GM10248 (cell line): ENCODE measurements at regions of chr14 and their contacts with region 1.

Region 1: GRCh38 chr14:73295198-73295796 is 58.0 kb downstream of the PAPLN start:
- DNase-seq: peak; percentile 43
- CTCF ChIP-seq: peak; percentile 64

Region 2: GRCh38 chr14:73153272-73153671 is 142.0 kb before region 1 on chr14:
- CTCF ChIA-PET with region 1: no interaction called
- POLR2A ChIA-PET with region 1: no interaction called
- DNase-seq: no peak
- CTCF ChIP-seq: no peak

Region 3: GRCh38 chr14:73280903-73281302 is 14.4 kb before region 1 on chr14:
- CTCF ChIA-PET with region 1: interaction called, 16 read pairs
- POLR2A ChIA-PET with region 1: no interaction called
- DNase-seq: no peak
- CTCF ChIP-seq: no peak

Region 4: DNA sequence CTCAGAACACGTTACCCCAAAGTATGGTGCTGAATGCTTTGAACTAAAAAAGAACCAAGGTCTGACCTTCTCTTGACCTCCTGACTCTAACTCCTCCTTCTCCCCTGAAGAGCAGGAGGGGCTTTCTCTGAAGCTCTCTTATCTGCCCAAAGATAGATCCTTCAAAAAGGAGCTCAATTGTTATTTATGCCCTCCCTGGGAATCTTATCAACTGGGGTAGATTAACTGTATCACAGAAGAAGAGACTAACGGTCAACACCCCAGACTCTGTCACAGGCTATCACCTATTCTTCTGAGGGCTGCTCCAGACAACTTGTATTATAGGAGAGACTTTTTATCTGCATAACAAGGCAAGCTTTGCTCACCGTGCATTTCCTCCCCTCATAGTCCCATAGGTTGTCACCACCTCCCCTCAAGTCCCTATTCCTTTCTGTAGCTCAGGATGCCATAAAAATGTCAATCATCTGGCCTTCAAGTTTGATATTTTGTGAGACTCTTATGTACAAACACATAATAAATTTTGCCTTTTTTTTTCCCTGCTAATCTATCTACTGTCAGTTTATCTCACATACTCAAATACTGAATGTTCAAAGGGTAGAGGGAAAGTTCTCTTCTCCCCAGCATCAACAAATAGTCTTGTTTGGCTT is 28.7 kb after region 1 on chr14:
- CTCF ChIA-PET with region 1: interaction called, 13 read pairs
- POLR2A ChIA-PET with region 1: no interaction called
- DNase-seq: no peak
- CTCF ChIP-seq: no peak

Region 5: DNA sequence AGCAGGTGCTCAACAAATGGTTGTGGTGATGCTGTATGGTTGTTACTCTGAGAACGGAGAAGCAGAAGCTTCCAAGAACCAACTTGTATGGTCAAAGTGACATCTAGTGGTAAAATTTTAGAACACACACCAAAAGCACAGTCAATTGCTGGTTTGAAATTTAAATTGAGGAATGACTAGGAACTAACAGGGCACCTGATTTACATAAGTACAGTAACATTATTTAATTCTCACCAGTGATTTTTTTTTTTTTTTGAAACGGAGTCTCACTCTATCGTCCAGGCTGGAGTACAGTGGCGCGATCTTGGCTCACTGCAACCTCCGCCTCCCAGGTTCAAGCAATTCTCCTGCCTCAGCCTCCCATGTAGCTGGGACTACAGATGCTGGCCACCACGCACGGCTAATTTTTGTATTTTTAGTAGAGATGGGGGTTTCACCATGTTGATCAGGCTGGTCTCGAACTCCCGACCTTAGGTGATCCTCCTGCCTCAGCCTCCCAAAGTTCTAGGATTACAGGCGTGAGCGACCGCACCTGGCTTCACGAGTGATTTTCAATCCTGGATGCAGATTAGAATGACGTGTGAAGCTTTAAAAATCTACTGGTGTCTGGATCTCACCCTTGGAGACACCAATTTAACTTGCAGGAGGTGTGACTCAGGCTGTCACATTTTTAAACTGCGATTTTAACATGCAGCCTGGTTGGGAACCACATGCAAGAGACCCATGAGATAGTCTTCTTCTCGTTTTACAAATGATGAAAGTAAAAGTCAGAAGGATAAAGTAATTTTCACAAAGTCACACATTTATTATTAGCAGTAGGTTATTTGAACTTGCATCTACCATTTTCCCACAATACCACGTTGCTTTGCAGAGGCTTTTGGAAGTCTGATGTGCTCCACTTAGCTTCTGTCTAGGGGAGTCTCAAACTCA is 177.2 kb after region 1 on chr14:
- CTCF ChIA-PET with region 1: interaction called, 64 read pairs
- POLR2A ChIA-PET with region 1: no interaction called
- DNase-seq: peak; percentile 67
- CTCF ChIP-seq: peak; percentile 60